Panc1 (cell line): ENCODE measurements at regions of chr1 and their contacts with region 1.

Region 1: DNA sequence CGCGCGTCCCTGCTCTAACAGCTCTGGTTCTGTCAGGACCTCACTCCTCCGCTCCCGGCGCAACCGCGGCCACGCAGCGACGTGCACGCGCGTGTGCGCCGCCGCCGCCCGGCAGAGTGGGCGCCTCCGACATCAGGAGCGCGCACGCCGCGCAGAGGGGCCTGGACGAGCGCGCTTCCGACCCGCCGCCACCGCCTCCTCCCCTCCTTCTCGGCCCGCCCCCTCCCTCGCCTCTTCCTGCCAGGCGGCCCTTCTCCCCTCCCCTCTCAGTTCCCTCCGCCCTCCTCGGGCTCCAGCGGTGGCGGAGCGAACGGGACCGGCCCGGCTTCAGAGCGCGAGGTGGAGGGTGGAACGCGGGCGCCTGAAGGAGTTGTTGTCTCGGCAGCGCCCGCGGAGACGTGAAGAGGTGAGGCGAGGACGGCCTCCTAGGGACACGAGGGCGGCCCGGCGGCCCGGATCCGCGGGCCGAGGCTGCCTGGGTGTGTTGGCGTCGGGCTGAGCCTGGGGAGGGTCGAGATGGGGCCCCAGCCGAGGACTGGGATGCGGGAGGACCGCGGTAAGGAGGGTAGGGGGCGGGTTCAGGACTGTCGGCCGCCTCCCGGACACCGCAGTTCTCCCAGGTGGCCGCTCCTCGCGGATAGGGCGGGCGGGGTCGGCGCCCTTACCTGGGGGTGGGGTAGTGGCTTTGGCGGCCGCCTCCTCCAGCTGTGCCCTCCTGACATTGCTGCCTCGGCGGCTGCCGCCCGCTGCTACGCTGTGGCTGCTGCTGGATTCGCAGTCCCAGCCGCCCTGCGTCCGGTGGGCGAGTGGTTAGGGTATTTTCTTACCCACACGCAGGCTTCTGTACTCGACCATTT is at the start of gene RABGAP1L:
- DNase-seq: peak; percentile 54
- ATAC-seq: peak; percentile 97
- H3K4me3 ChIP-seq: peak within 1 kb of the TSS; percentile 65 to 93
- H3K27ac ChIP-seq: peak within 1 kb of the TSS; percentile 97
- H3K4me1 ChIP-seq: peaks cover 12% of the 10 kb centered on the region; the same call in 1 of the 2 replicates
- H3K27me3 ChIP-seq: no peaks in the 10 kb centered on the region
- CTCF ChIP-seq: no peak
- total RNA-seq, gene RABGAP1L: 37.0 TPM

Region 2: GRCh38 chr1:174174461-174175329 is 15.2 kb after region 1 on chr1:
- CTCF ChIA-PET with region 1: no interaction called
- POLR2A ChIA-PET with region 1: interaction called, 11 read pairs
- in situ Hi-C with region 1: no loop called
- intact Hi-C with region 1: no loop called
- DNase-seq: no peak
- ATAC-seq: no peak
- H3K4me3 ChIP-seq: no peak overlapping the region
- H3K27ac ChIP-seq: no peak overlapping the region
- H3K4me1 ChIP-seq: no peaks in the 10 kb centered on the region
- H3K27me3 ChIP-seq: no peaks in the 10 kb centered on the region
- CTCF ChIP-seq: no peak

Region 3: GRCh38 chr1:174676856-174677255 is 517.4 kb after region 1 on chr1:
- CTCF ChIA-PET with region 1: no interaction called
- POLR2A ChIA-PET with region 1: interaction called, 15 read pairs
- in situ Hi-C with region 1: no loop called
- intact Hi-C with region 1: no loop called
- DNase-seq: no peak
- ATAC-seq: no peak
- H3K4me3 ChIP-seq: no peak overlapping the region
- H3K27ac ChIP-seq: no peak overlapping the region
- H3K4me1 ChIP-seq: no peaks in the 10 kb centered on the region
- H3K27me3 ChIP-seq: no peaks in the 10 kb centered on the region
- CTCF ChIP-seq: no peak